IMR-90 (cell line): ENCODE measurements at regions of chr4 and their contacts with region 1.

Region 1: DNA sequence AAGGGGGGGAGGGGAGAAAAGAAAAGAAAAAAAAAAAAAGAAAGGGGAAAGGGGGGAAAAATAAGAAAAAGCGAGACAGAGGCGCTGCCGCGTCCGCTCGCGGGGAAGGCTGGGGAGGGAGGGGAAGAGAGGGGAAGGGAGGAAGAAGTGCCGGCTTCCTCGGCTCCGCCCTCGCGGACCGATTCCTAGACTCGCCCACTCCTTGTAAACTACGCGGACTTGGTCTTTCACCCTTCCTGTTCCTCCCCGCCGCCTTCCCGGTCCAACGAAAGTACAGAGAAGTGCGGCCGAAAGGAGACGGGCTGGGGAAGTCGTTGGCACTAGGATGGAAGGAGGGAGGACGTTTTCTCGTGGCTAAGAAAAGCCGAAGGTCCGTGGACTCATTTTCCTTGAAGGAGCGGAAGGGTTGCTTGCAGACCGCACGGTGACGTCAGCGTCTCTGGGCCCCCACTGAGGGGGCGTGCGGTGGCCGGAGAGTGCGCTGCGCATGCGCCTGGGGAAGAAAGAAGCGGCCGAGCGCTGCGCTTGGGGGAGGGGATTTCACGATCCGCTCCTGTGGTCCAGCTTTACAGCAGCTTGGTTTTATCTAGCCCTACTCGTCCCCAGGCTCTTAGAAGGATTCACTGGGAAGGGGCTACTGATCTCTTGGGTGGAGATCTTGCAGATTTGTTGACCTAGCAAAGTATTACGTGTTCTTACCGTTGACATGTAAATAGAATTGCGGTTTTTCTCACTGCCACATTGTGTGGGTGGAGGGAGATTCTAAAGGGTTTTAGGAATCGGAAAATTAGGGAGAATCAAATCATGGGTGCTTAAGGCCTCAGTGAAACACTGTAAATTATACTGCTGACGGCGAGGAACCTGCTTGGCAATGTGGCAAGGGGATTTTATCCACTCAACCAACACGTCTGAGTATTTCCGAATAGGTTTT is at the start of gene CCNI:
- DNase-seq: peak; percentile 97
- ATAC-seq: peak; percentile 89
- H3K4me3 ChIP-seq: peak within 1 kb of the TSS; percentile 58
- H3K27ac ChIP-seq: peak within 1 kb of the TSS; percentile 93
- H3K4me1 ChIP-seq: no peaks in the 10 kb centered on the region
- H3K27me3 ChIP-seq: no peaks in the 10 kb centered on the region
- CTCF ChIP-seq: no peak
- POLR2A ChIP-seq: peak; percentile 97
- RAD21 ChIP-seq: no peak
- total RNA-seq, gene CCNI: 98.6 and 100 TPM in 2 replicates

Region 2: GRCh38 chr4:77172336-77172735 is 96.2 kb after region 1 on chr4:
- CTCF ChIA-PET with region 1: no interaction called
- POLR2A ChIA-PET with region 1: interaction called, 5 read pairs
- dilution Hi-C with region 1: no loop called
- in situ Hi-C with region 1: loop called (anchors 5 kb)
- intact Hi-C with region 1: no loop called
- DNase-seq: peak; percentile 95
- ATAC-seq: peak; percentile 90
- H3K4me3 ChIP-seq: no peak overlapping the region
- H3K27ac ChIP-seq: no peak overlapping the region
- H3K4me1 ChIP-seq: peaks cover 10% of the 10 kb centered on the region
- H3K27me3 ChIP-seq: peaks cover 33% of the 10 kb centered on the region
- CTCF ChIP-seq: no peak
- POLR2A ChIP-seq: no peak
- RAD21 ChIP-seq: no peak

Region 3: DNA sequence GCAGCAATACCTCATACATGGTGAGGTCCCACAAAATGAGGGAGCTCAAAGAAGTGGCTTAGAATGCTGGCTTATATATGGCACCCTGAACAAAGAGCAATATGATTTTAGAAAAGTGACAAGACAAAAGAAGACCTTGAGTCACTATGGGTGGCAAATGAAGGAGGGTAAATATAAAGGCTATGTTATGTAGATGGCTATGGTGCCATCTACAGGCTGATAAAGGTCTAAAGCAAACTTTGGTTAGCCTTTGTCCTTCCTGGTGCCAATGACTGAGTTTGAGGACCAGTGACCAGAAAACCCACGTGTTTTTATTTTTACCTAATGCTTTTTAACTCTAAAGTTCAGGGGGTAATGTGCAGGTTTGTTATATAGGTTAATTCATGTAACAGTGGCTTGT is 232.7 kb after region 1 on chr4:
- CTCF ChIA-PET with region 1: no interaction called
- POLR2A ChIA-PET with region 1: no interaction called
- dilution Hi-C with region 1: no loop called
- in situ Hi-C with region 1: no loop called
- intact Hi-C with region 1: loop called (anchors 10 kb)
- DNase-seq: peak; percentile 35
- ATAC-seq: peak; percentile 77
- H3K4me3 ChIP-seq: no peak overlapping the region
- H3K27ac ChIP-seq: no peak overlapping the region
- H3K4me1 ChIP-seq: no peaks in the 10 kb centered on the region
- H3K27me3 ChIP-seq: no peaks in the 10 kb centered on the region; the same call in 1 of the 2 replicates
- CTCF ChIP-seq: peak; percentile 54
- POLR2A ChIP-seq: no peak
- RAD21 ChIP-seq: peak; percentile 55